BJ (cell line): ENCODE measurements at regions of chr19 and their contacts with region 1.

Region 1: DNA sequence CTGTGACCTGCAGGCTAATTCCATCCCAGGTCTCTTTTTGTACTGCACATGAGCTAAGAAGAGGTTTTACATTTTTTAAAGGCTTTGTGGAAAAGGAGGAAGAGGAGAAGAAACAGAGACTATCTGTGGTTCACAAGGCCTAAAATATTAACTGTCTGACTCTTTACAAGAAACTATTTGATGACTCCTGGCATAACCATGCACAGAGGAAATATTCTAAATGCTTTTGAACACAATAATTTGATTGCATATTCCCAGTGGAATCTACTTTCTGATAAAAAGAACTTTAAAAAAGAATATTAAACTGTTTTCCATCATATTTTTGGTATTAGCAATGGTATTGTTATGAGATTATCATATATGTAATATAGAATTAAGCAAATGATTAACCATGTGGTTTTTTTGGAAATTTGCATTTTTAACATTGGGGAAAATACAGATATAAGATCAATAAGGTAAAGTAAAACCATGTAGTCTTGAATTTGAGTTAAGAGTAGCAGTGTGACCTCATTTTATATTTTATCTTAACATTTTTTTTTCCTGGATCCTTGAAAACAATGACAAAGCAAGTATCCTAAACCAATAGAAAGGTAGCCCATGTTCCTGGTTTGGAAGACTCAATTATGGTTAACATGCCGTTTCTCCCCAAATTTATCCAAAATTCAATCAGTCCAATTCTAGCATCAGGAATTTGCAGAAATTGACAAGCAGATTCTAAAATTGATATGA is 251.0 kb downstream of the UQCRFS1 start:
- DNase-seq: peak; percentile 63
- H3K4me3 ChIP-seq: no peak overlapping the region
- H3K27me3 ChIP-seq: no peaks in the 10 kb centered on the region
- CTCF ChIP-seq: no peak

Region 2: DNA sequence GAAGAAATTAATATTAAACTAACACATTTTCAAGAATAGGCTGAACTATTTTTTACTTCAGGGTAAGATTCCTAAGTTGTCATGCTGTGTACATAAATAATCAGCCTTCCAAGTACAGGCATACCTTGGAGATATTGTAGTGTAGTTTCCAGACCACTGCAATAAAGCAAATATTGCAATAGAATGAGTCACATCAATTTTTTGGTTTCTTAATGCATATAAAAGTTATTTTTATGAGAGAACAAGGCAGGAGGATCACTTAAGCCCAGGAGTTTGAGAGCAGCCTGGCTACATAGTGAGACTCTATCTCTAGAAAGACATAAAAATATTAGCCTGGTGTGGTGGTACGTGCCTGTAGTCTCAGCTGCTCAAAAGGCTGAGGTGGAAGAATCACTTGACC is 260.4 kb before region 1 on chr19:
- CTCF ChIA-PET with region 1: no interaction called
- POLR2A ChIA-PET with region 1: interaction called, 13 read pairs
- DNase-seq: peak; percentile 84
- H3K4me3 ChIP-seq: no peak overlapping the region
- H3K27me3 ChIP-seq: no peaks in the 10 kb centered on the region
- CTCF ChIP-seq: no peak